ENCODE measurements at regions of chr11 and their contacts with region 1.

Region 1: DNA sequence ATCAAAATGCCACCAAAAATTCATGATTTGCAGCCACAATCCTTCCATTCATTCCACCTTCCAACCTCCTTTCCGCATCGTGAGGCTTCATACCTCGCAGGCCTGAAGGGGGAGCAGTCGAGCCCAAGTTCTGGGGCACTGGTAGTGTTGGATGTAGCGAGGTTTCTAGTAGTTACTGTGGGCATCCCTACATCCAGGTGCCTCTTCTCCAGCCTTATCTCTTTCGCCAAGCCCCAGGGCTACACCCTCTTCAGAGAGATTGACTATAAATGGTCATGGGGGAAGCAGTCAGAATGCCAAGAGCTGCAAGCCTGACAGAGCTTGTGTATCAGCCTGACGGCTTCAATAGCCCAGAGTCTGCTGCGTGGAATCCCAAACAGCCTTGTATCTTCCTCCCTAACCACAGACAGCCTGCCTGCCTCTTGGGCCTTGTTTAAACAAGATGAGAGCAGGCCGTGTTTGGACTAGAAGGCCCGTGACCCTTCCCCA is 28.9 kb downstream of the CLMP start:
- DNase-seq: peak; percentile 43 to 88
- H3K4me3 ChIP-seq: no peak overlapping the region
- H3K27ac ChIP-seq: no peak overlapping the region
- H3K4me1 ChIP-seq: peaks cover 0 to 5% (median 2%) of the 10 kb centered on the region in 4 experiments; a peak in 3 of 7 replicates
- H3K27me3 ChIP-seq: no peaks in the 10 kb centered on the region
- CTCF ChIP-seq: peak; percentile 78 to 96 (median 93)
- EP300 ChIP-seq: no peak
- POLR2A ChIP-seq: no peak
- RAD21 ChIP-seq: peak; percentile 72 to 78

Region 2: GRCh38 chr11:123103326-123103980 is 62.7 kb before region 1 on chr11:
- CTCF ChIA-PET with region 1: interaction called, 12 read pairs
- POLR2A ChIA-PET with region 1: interaction called, 3 read pairs
- DNase-seq: no peak
- H3K4me3 ChIP-seq: no peak overlapping the region
- H3K27ac ChIP-seq: no peak overlapping the region
- H3K4me1 ChIP-seq: peaks cover 0 to 5% (median 1%) of the 10 kb centered on the region in 4 experiments; a peak in 5 of 7 replicates
- H3K27me3 ChIP-seq: no peaks in the 10 kb centered on the region
- CTCF ChIP-seq: peak in 2 of 3 experiments; percentile 59 to 71; a peak in 3 of 4 replicates
- EP300 ChIP-seq: no peak
- POLR2A ChIP-seq: no peak
- RAD21 ChIP-seq: peak; percentile 72 to 79

Region 3: GRCh38 chr11:123145220-123145619 is 20.9 kb before region 1 on chr11:
- CTCF ChIA-PET with region 1: interaction called, 37 read pairs
- POLR2A ChIA-PET with region 1: no interaction called
- DNase-seq: no peak
- H3K4me3 ChIP-seq: no peak overlapping the region
- H3K27ac ChIP-seq: no peak overlapping the region
- H3K4me1 ChIP-seq: peaks cover 0 to 7% (median 2%) of the 10 kb centered on the region in 4 experiments; a peak in 4 of 7 replicates
- H3K27me3 ChIP-seq: no peaks in the 10 kb centered on the region
- CTCF ChIP-seq: no peak
- EP300 ChIP-seq: no peak
- POLR2A ChIP-seq: no peak
- RAD21 ChIP-seq: no peak

Region 4: GRCh38 chr11:123183391-123184099 is 17.4 kb after region 1 on chr11:
- CTCF ChIA-PET with region 1: interaction called, 106 read pairs
- POLR2A ChIA-PET with region 1: interaction called, 8 read pairs
- DNase-seq: no peak
- H3K4me3 ChIP-seq: no peak overlapping the region
- H3K27ac ChIP-seq: no peak overlapping the region
- H3K4me1 ChIP-seq: peaks cover 5 to 29% (median 14%) of the 10 kb centered on the region in 4 experiments
- H3K27me3 ChIP-seq: no peaks in the 10 kb centered on the region
- CTCF ChIP-seq: no peak
- EP300 ChIP-seq: no peak
- POLR2A ChIP-seq: no peak
- RAD21 ChIP-seq: no peak

Region 5: DNA sequence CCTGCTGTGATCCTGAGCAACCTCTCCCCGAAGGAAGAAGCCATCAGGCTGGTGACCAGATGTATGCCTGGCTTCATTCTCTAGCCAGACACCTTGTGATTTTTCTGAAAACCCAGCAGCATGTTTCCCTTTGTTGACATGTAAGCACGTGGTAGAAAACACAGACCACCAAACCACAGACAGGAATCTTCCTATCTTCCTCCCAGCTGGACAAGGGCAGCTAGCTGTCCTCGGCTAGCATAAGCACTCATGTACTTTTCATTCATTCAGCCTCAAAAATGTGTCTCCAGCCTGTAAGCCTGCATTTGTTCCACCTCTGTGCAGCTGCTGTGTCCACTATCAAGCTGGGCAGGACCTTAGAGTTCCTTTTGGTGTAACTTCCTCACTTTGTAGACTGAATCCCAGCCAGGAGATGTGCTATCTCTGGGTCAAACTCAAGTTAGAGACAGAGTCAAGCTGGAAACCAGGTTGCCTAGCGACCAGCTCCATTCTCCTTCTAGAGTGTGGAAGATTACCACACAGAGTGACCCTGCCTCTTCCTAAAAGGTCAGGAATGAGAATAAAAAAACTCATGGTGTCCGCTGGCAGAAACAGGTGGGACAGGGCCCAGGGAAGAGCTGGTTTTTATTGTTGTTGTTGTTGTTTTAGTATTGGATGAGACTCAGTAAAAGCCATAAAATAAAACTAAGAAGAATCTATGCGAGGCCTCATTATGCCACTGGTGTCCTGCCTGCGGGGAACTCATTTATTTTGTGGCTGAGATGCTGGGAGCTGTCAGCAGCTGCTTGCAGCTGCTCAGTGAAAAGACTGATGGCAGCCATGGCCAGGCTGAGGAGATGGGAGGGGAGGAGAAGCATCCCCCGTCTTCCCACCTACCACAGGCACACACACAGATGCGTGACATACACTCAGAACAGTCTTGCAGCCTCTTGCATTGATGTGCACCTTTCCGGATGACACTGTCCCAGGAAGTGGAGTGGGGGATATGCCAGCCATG is 36.3 kb after region 1 on chr11:
- CTCF ChIA-PET with region 1: interaction called, 14 read pairs
- POLR2A ChIA-PET with region 1: no interaction called
- DNase-seq: peak in 1 of 2 experiments; percentile 39
- H3K4me3 ChIP-seq: no peak overlapping the region
- H3K27ac ChIP-seq: no peak overlapping the region
- H3K4me1 ChIP-seq: peaks cover 2 to 6% (median 5%) of the 10 kb centered on the region in 4 experiments; a peak in 6 of 7 replicates
- H3K27me3 ChIP-seq: no peaks in the 10 kb centered on the region; a peak in 2 of 7 replicates
- CTCF ChIP-seq: no peak
- EP300 ChIP-seq: no peak
- POLR2A ChIP-seq: no peak
- RAD21 ChIP-seq: no peak

Region 6: GRCh38 chr11:123261345-123262106 is 95.4 kb after region 1 on chr11:
- CTCF ChIA-PET with region 1: interaction called, 16 read pairs
- POLR2A ChIA-PET with region 1: no interaction called
- DNase-seq: peak; percentile 68 to 97
- H3K4me3 ChIP-seq: peak overlapping the region in 2 of 4 experiments; percentile 34 to 38; a peak in 1 of 8 replicates
- H3K27ac ChIP-seq: no peak overlapping the region
- H3K4me1 ChIP-seq: peaks cover 0 to 2% (median 0%) of the 10 kb centered on the region in 4 experiments; a peak in 1 of 7 replicates
- H3K27me3 ChIP-seq: peaks cover 0 to 2% (median 0%) of the 10 kb centered on the region in 4 experiments; a peak in 1 of 7 replicates
- CTCF ChIP-seq: peak; percentile 90 to 97 (median 95)
- EP300 ChIP-seq: no peak
- POLR2A ChIP-seq: peak in 1 of 2 experiments; percentile 57; a peak in 1 of 3 replicates
- RAD21 ChIP-seq: peak; percentile 85 to 88

Measured in H1 (cell line).